ENCODE measurements at regions of chr20 and their contacts with region 1.

Region 1: DNA sequence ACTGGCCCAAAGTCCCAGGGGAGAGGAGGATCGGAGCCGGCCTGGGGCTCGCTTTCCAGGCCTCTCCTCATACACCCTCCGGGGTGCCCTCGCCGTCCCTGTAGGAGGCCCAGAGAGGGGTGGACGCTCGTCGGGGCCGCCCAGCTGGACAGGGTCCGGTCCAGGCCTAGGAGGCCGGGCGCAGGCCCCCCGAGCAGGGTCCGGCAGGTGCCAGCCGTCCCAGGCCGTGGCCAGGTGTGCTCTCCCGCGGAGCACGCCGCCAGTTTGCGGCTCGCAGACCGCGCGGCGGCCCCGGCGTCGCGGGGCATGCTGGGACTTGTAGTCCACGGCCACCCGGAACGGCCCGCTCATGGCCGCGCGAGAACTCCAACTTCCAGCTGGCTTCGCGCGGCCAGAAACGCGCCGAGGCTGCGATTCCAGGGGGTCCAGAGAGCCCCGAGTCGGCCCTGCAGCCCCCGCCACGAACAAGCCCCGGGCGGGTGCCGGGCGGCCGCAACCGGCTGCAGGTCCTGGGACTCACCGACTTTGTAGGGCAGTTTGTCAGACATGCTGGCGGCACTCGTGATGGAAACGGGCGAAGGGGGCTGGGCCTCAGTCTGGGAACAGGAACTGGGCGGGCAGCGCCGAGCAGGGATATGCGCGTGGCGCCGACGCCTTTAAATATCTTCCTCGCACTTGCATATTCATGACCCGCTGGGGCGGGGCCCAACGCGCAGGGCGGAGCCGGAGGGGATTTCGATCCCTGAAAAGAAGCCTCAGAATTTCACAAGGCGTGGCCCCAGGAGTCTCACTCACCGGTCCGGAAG is at the start of gene AHCY:
- DNase-seq: peak; percentile 97
- ATAC-seq: peak; percentile 96
- H3K4me3 Mint-ChIP-seq: peak within 1 kb of the TSS; percentile 90
- H3K27ac Mint-ChIP-seq: peak within 1 kb of the TSS; percentile 91
- H3K4me1 Mint-ChIP-seq: peaks cover 18% of the 10 kb centered on the region
- H3K27me3 Mint-ChIP-seq: no peaks in the 10 kb centered on the region
- total RNA-seq, gene AHCY: 183 to 189 TPM

Region 2: GRCh38 chr20:33443512-33444239 is 859.2 kb before region 1 on chr20 and contains the start of gene SNTA1:
- CTCF ChIA-PET with region 1: no interaction called
- POLR2A ChIA-PET with region 1: no interaction called
- intact Hi-C with region 1: loop called in 1 of 2 experiments (anchors 1 kb)
- DNase-seq: peak; percentile 95
- ATAC-seq: peak; percentile 92
- H3K4me3 Mint-ChIP-seq: peak within 1 kb of the TSS; percentile 83
- H3K27ac Mint-ChIP-seq: peak within 1 kb of the TSS; percentile 78
- H3K4me1 Mint-ChIP-seq: peaks cover 15% of the 10 kb centered on the region
- H3K27me3 Mint-ChIP-seq: no peaks in the 10 kb centered on the region
- total RNA-seq, gene SNTA1: 4.2 to 5.0 TPM

Region 3: GRCh38 chr20:33897313-33897912 is 405.5 kb before region 1 on chr20:
- CTCF ChIA-PET with region 1: no interaction called
- POLR2A ChIA-PET with region 1: no interaction called
- intact Hi-C with region 1: no loop called
- DNase-seq: peak; percentile 29
- ATAC-seq: no peak
- H3K4me3 Mint-ChIP-seq: no peak overlapping the region
- H3K27ac Mint-ChIP-seq: no peak overlapping the region
- H3K4me1 Mint-ChIP-seq: no peaks in the 10 kb centered on the region
- H3K27me3 Mint-ChIP-seq: peaks cover 7% of the 10 kb centered on the region

Region 4: DNA sequence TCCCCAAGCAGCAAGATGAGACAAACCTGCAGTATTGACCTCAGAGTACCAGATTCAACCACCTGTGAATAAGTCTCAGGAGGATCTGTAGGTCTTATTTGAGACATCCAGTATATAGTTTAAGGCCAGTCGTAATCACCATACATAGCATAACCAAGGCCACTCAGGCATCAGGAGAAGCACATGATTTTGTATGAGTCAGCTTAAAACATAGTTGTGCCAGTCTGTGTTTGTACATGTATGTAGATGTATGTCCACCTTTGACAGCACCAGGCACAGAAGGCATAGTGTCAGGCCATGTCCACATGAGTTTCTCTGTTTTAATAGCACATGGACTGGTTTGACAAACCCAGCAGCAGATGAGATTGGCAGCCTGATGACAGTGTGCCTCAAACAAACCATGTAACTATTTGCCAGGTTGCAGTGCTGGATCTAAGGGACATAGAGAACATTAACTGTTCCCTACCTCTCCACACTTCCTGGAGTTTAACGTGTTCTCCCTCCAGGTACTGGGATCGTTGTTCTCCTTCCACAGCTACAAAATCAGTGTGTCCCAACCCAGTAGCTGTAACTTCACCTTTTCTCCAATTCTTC is 70.3 kb before region 1 on chr20:
- CTCF ChIA-PET with region 1: no interaction called
- POLR2A ChIA-PET with region 1: no interaction called
- intact Hi-C with region 1: no loop called
- DNase-seq: no peak
- ATAC-seq: no peak
- H3K4me3 Mint-ChIP-seq: no peak overlapping the region
- H3K27ac Mint-ChIP-seq: no peak overlapping the region
- H3K4me1 Mint-ChIP-seq: no peaks in the 10 kb centered on the region
- H3K27me3 Mint-ChIP-seq: no peaks in the 10 kb centered on the region

Region 5: GRCh38 chr20:34282041-34282440 is 20.9 kb before region 1 on chr20:
- CTCF ChIA-PET with region 1: no interaction called
- POLR2A ChIA-PET with region 1: no interaction called
- intact Hi-C with region 1: no loop called
- DNase-seq: no peak
- ATAC-seq: no peak
- H3K4me3 Mint-ChIP-seq: no peak overlapping the region
- H3K27ac Mint-ChIP-seq: no peak overlapping the region
- H3K4me1 Mint-ChIP-seq: no peaks in the 10 kb centered on the region
- H3K27me3 Mint-ChIP-seq: no peaks in the 10 kb centered on the region

Region 6: DNA sequence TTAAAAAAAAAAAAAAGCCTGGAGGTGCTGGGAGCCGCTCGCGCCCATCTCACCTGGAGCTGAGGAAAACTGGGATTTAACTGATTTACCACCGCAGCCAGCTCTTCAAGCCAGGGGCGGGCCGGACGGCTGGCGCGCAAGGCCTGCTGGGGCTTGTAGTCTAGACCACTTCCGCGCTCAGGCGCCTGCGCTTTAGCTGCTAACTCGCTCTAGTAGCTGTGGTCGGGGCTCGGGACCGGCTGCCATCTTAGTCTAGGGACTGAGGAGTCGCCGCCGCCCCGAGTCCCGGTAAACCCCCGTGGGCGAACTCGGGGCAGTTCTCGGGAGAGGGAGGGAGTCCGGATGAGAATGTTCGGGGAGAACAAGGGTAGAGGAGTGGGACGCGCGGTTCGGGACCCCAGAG is 60.1 kb after region 1 on chr20 and contains the start of gene ITCH:
- CTCF ChIA-PET with region 1: interaction called, 3 read pairs
- POLR2A ChIA-PET with region 1: interaction called, 6 read pairs
- intact Hi-C with region 1: loop called (anchors 1 kb)
- DNase-seq: peak; percentile 97
- ATAC-seq: peak; percentile 99
- H3K4me3 Mint-ChIP-seq: peak within 1 kb of the TSS; percentile 91
- H3K27ac Mint-ChIP-seq: peak within 1 kb of the TSS; percentile 98
- H3K4me1 Mint-ChIP-seq: peaks cover 38% of the 10 kb centered on the region
- H3K27me3 Mint-ChIP-seq: no peaks in the 10 kb centered on the region
- total RNA-seq, gene ITCH: 41.4 to 43.5 TPM

Region 7: GRCh38 chr20:34676642-34677373 is 373.9 kb after region 1 on chr20 and contains the start of gene PIGU:
- CTCF ChIA-PET with region 1: interaction called, 3 read pairs
- POLR2A ChIA-PET with region 1: interaction called, 3 read pairs
- intact Hi-C with region 1: loop called (anchors 1 kb)
- DNase-seq: peak; percentile 98
- ATAC-seq: peak; percentile 97
- H3K4me3 Mint-ChIP-seq: peak within 1 kb of the TSS; percentile 97
- H3K27ac Mint-ChIP-seq: peak within 1 kb of the TSS; percentile 96
- H3K4me1 Mint-ChIP-seq: peaks cover 34% of the 10 kb centered on the region
- H3K27me3 Mint-ChIP-seq: no peaks in the 10 kb centered on the region
- total RNA-seq, gene PIGU: 21.1 to 28.2 TPM

Region 8: GRCh38 chr20:34825530-34826362 is 522.8 kb after region 1 on chr20 and contains the start of gene NCOA6:
- CTCF ChIA-PET with region 1: no interaction called
- POLR2A ChIA-PET with region 1: no interaction called
- intact Hi-C with region 1: loop called in 1 of 2 experiments (anchors 1 kb)
- DNase-seq: peak; percentile 95
- ATAC-seq: peak; percentile 67
- H3K4me3 Mint-ChIP-seq: peak within 1 kb of the TSS; percentile 86
- H3K27ac Mint-ChIP-seq: peak within 1 kb of the TSS; percentile 95
- H3K4me1 Mint-ChIP-seq: peaks cover 30% of the 10 kb centered on the region
- H3K27me3 Mint-ChIP-seq: no peaks in the 10 kb centered on the region
- total RNA-seq, gene NCOA6: 20.3 to 31.1 TPM

Region 9: GRCh38 chr20:35771689-35772562 is 1469.0 kb after region 1 on chr20 and contains the start of gene PHF20:
- CTCF ChIA-PET with region 1: no interaction called
- POLR2A ChIA-PET with region 1: no interaction called
- intact Hi-C with region 1: loop called in 1 of 2 experiments (anchors 10 kb)
- DNase-seq: peak; percentile 100
- ATAC-seq: peak; percentile 91
- H3K4me3 Mint-ChIP-seq: peak within 1 kb of the TSS; percentile 81
- H3K27ac Mint-ChIP-seq: peak within 1 kb of the TSS; percentile 94
- H3K4me1 Mint-ChIP-seq: peaks cover 76% of the 10 kb centered on the region
- H3K27me3 Mint-ChIP-seq: no peaks in the 10 kb centered on the region
- total RNA-seq, gene PHF20: 54.3 to 61.6 TPM

Region 10: DNA sequence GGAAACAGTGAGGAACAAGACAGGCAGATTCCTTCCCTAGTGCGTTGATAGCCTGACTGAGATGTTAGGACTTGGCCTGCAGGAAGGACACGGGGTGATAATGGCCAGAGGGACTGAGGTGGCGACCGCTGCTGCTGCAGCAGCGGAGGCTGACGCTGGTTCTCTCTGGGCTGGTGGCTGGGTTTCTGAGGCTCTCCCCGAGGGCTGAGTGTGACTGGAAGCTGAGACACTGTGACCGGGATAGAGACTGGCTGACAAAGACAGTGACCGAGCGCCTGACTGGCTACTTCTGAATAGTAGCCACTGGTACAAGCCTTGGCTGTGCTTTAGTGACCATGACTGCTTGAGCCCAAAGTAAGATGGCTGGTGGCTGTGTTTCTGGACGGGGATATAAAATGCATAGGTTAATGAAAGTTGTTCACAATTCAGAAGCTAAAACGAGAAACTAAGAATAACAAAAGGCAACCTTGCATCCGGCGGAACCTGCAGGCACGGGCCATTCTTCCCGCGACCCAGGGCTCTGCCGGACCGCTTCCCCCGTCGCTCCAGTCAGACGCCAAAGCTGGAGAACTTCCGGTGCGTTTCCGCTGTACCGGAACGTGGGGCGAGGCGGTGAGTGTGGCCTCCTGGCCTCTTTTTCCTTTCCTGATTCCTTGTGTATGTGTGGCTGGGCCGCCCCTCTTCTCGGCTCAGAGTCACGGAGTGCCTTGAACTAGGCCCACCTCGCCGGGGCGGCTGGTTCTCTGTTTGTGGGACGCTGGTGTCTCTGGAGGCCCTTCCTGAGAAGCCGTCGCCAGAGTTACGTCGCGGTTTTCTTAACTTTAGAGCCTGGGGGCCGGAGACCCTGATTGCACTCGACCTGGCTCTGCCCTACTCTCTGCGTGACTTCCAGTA is 1933.2 kb after region 1 on chr20 and contains the start of gene AAR2:
- CTCF ChIA-PET with region 1: no interaction called
- POLR2A ChIA-PET with region 1: no interaction called
- intact Hi-C with region 1: no loop called
- DNase-seq: peak; percentile 91
- ATAC-seq: peak; percentile 99
- H3K4me3 Mint-ChIP-seq: peak within 1 kb of the TSS; percentile 78
- H3K27ac Mint-ChIP-seq: peak within 1 kb of the TSS; percentile 81
- H3K4me1 Mint-ChIP-seq: peaks cover 32% of the 10 kb centered on the region
- H3K27me3 Mint-ChIP-seq: no peaks in the 10 kb centered on the region
- total RNA-seq, gene AAR2: 18.7 to 20.7 TPM

Measured in activated CD4-positive, alpha-beta T cell treated with anti-CD3 and anti-CD28 coated beads for 36 hours (primary cell).